ENCODE measurements at regions of chr1 and their contacts with region 1.

Region 1: GRCh38 chr1:116321766-116322175 is 51.3 kb upstream of the ATP1A1 start:
- DNase-seq: no peak
- H3K4me3 ChIP-seq: no peak overlapping the region
- H3K4me3 Mint-ChIP-seq: no peak overlapping the region
- H3K27ac Mint-ChIP-seq: no peak overlapping the region
- H3K4me1 ChIP-seq: peaks cover 44% of the 10 kb centered on the region
- H3K4me1 Mint-ChIP-seq: peaks cover 36% of the 10 kb centered on the region
- H3K27me3 ChIP-seq: no peaks in the 10 kb centered on the region
- H3K27me3 Mint-ChIP-seq: no peaks in the 10 kb centered on the region
- CTCF ChIP-seq: no peak

Region 2: DNA sequence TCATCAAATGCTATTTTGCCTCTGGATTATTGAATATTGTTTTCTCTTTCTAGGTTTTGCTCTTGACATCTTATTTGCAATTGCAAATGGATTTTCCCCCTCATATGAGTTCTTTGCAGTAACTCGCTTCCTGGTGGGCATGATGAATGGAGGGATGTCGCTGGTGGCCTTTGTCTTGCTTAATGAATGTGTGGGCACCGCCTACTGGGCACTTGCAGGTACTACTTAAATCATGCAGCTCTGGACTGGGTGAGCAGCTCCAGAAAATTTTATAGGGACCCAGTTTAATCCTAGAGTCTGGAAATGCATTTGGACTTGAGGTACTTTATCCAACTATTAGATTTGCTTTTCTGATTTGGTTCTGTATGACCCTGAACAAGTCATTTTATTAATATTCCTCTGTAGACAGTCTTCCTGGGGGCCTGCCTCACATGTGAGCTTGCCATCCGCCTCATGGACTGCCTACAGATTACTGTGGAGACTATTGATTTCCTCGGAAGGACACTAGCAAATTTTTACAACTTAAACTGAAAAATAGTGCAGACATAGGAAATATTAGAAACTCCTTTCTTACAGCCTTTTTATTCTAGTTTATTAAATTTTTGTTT is 301.0 kb before region 1 on chr1:
- CTCF ChIA-PET with region 1: no interaction called
- POLR2A ChIA-PET with region 1: no interaction called
- intact Hi-C with region 1: no loop called
- DNase-seq: peak; percentile 42 to 67
- H3K4me3 ChIP-seq: no peak overlapping the region
- H3K4me3 Mint-ChIP-seq: no peak overlapping the region
- H3K27ac Mint-ChIP-seq: no peak overlapping the region
- H3K4me1 ChIP-seq: no peaks in the 10 kb centered on the region
- H3K4me1 Mint-ChIP-seq: no peaks in the 10 kb centered on the region
- H3K27me3 ChIP-seq: no peaks in the 10 kb centered on the region
- H3K27me3 Mint-ChIP-seq: peaks cover 4% of the 10 kb centered on the region
- CTCF ChIP-seq: peak; percentile 37 to 51

Region 3: DNA sequence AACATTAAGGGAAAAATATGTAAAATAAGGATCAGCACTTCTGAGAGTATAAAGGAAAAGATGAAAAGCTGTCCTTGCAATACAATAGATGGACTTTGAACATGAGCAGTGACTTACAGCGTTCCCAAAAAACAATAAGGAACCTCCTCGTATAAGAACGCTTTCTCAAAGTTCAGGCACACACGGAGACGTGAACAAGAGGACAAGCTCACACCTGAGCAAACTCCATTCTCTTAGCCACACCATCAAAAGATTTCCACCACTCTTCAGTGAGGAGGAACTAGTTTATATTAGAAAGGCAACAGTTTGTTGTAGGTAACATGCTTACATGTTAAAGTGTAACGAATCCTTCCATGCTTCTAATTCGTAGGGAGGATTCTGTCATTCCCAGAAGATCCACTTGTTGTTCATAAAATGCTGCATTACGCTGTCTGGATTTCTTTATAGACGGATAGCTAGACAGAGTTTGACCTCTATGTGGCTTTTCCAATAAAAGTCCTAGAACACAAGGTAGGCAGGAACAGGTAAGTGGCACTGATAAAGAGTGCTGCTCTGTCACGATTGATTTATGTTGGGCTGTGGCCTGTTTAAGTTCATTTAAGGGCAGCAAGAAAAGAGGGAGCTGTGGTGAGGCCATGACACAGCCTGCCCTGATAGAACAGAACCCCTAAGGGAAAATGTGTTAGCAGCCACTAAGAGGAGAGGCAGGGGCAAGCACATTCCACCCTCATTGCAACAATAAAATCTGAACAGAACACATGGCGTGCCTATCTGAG is 14.3 kb after region 1 on chr1:
- CTCF ChIA-PET with region 1: no interaction called
- POLR2A ChIA-PET with region 1: no interaction called
- intact Hi-C with region 1: loop called (anchors 2 kb)
- DNase-seq: no peak
- H3K4me3 ChIP-seq: no peak overlapping the region
- H3K4me3 Mint-ChIP-seq: no peak overlapping the region
- H3K27ac Mint-ChIP-seq: peak overlapping the region; percentile 80
- H3K4me1 ChIP-seq: peaks cover 37% of the 10 kb centered on the region
- H3K4me1 Mint-ChIP-seq: peaks cover 40% of the 10 kb centered on the region
- H3K27me3 ChIP-seq: no peaks in the 10 kb centered on the region
- H3K27me3 Mint-ChIP-seq: no peaks in the 10 kb centered on the region
- CTCF ChIP-seq: no peak

Region 4: DNA sequence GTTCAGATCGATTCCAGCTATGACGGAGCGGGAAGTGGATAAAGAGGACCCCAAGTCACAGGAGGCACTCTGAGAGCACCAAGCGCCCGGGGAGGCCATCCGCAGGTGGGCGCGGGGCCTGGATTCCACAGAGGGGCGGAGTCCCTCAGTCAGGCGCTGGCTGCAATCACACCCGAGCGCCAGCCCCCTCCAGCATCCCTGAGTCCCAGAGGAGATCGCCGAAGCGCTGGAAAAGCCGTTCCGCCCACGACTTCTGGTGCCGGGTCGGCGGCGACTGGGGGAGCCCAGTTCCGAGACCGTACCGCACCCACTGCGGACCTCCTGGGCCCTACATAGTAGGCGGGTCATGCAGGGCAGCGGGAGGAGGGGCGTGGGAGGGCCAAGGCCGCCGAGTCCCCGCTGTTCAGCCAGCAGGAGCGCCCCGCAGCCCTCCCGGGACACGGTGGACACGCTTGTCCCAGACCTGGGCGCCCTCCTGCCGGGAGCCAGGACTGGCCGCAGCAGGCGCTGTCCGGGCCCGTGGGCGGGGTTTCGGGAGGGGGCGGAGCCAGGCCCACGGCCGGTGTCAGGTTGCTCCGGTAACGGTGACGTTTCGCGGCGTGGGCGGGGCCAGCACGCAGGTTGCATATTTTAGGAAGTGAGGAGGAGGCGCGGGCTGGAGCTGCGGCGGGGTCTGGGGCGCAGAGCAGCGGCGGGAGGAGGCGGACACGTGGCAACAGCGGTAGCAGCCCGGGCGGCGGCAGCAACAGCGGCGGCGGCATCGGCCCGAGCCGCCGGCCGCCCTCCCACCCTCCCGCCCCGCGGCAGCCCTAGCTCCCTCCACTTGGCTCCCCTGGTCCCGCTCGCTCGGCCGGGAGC is 51.0 kb after region 1 on chr1 and contains the start of gene ATP1A1:
- CTCF ChIA-PET with region 1: no interaction called
- POLR2A ChIA-PET with region 1: interaction called, 13 read pairs
- intact Hi-C with region 1: loop called (anchors 2 kb)
- DNase-seq: peak; percentile 95 to 97
- H3K4me3 ChIP-seq: peak within 1 kb of the TSS; percentile 86
- H3K4me3 Mint-ChIP-seq: peak within 1 kb of the TSS; percentile 89
- H3K27ac Mint-ChIP-seq: peak within 1 kb of the TSS; percentile 91
- H3K4me1 ChIP-seq: peaks cover 23% of the 10 kb centered on the region
- H3K4me1 Mint-ChIP-seq: peaks cover 15% of the 10 kb centered on the region
- H3K27me3 ChIP-seq: no peaks in the 10 kb centered on the region
- H3K27me3 Mint-ChIP-seq: no peaks in the 10 kb centered on the region
- CTCF ChIP-seq: no peak
- total RNA-seq, gene ATP1A1: 479 and 508 TPM in 2 replicates

Region 5: GRCh38 chr1:116377541-116378529 is 56.1 kb after region 1 on chr1:
- CTCF ChIA-PET with region 1: no interaction called
- POLR2A ChIA-PET with region 1: interaction called, 13 read pairs
- intact Hi-C with region 1: loop called (anchors 2 kb)
- DNase-seq: no peak
- H3K4me3 ChIP-seq: no peak overlapping the region
- H3K4me3 Mint-ChIP-seq: peak overlapping the region; percentile 27
- H3K27ac Mint-ChIP-seq: peak overlapping the region; percentile 63
- H3K4me1 ChIP-seq: peaks cover 62% of the 10 kb centered on the region
- H3K4me1 Mint-ChIP-seq: peaks cover 40% of the 10 kb centered on the region
- H3K27me3 ChIP-seq: no peaks in the 10 kb centered on the region
- H3K27me3 Mint-ChIP-seq: no peaks in the 10 kb centered on the region
- CTCF ChIP-seq: no peak

Region 6: DNA sequence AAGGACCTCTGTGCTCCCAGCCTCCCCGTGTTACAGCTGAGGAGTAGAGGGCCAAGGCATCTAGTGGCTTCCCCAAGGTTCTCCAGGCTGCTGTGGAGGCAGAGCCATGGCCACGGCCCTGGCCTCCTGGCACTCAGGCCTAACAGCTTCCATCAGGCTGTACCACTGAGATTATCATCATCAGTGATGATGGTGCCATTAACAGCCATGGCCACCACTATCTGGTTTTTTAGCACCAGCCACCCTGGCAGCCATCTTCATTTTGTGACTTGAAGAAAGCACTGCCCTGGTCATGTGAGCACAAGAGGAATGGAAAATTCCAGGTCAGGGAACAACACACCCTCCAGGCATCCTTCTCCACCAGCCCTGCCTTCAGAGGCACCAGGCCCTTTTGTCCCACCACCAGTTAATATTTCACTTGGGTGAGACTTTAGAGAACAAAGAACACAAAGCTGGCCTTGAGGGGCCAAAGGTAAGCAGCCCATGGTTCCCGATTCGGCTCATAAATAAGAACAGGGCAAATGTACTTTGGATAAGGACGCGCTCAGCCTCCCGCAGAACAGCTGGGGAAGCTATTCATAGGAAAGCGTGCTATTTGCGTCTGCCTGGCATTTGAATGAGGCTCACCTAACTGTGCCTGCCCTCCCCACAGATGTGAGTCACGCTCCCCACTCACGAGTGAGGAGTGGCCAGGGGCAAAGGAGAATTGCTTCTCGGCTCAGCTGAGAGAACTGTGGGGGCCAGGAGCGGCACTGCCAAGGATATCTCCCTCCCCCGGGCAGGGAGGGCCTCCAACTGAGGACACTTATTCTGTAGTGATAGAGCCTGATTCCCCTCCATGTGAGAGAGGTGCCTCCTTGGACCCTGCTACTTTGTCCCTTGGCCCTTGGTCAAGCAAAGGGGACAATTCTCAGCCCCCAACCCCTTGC is 153.4 kb after region 1 on chr1:
- CTCF ChIA-PET with region 1: no interaction called
- POLR2A ChIA-PET with region 1: no interaction called
- intact Hi-C with region 1: loop called (anchors 1 kb)
- DNase-seq: peak; percentile 85 to 92
- H3K4me3 ChIP-seq: peak overlapping the region; percentile 5; the same call in 1 of the 2 replicates
- H3K4me3 Mint-ChIP-seq: peak overlapping the region; percentile 49
- H3K27ac Mint-ChIP-seq: peak overlapping the region; percentile 70
- H3K4me1 ChIP-seq: peaks cover 65% of the 10 kb centered on the region
- H3K4me1 Mint-ChIP-seq: peaks cover 30% of the 10 kb centered on the region
- H3K27me3 ChIP-seq: no peaks in the 10 kb centered on the region
- H3K27me3 Mint-ChIP-seq: no peaks in the 10 kb centered on the region
- CTCF ChIP-seq: no peak

Measured in Caco-2 (cell line).